Left colon (tissue), 2 donors: ENCODE measurements at regions of chr12 and their contacts with region 1.

Region 1: GRCh38 chr12:111313833-111314259 is 55.0 kb downstream of the PHETA1 start:
- DNase-seq: peak; percentile 32 to 67
- ATAC-seq: peak; percentile 53

Region 2: DNA sequence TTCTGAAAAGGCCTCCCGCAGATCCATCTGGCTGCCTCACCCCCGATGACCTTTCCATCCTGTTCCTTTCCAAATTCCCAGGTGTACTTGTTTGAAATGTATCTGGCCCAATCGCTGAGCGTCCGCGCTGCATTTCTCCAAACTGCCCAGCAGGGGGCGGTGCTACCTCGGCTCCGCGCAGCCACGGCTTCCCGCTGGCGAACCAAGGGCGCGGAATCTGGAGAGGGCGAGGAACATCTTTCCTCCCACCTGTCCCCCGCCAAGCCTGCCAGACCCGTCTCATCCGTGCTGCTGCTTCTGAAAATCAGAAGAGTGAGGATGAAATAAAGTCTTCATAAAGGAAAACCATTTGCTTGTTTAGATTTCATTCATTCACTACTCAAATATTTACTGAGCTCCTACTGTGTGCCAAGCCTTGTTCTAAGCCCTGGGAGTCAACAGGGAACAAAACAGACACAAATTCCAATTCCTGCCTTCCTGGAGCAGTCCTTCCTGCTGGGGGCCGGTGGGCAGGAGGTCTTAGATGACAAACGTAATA is 376.7 kb before region 1 on chr12:
- intact Hi-C with region 1: loop called in 1 of 2 experiments (anchors 5 kb)
- DNase-seq: peak in 1 of 2 donors; percentile 45
- ATAC-seq: peak; percentile 53

Region 3: GRCh38 chr12:111024205-111024801 is 289.5 kb before region 1 on chr12:
- intact Hi-C with region 1: loop called in 1 of 2 experiments (anchors 5 kb)
- DNase-seq: peak; percentile 34 to 63
- ATAC-seq: peak; percentile 85

Region 4: DNA sequence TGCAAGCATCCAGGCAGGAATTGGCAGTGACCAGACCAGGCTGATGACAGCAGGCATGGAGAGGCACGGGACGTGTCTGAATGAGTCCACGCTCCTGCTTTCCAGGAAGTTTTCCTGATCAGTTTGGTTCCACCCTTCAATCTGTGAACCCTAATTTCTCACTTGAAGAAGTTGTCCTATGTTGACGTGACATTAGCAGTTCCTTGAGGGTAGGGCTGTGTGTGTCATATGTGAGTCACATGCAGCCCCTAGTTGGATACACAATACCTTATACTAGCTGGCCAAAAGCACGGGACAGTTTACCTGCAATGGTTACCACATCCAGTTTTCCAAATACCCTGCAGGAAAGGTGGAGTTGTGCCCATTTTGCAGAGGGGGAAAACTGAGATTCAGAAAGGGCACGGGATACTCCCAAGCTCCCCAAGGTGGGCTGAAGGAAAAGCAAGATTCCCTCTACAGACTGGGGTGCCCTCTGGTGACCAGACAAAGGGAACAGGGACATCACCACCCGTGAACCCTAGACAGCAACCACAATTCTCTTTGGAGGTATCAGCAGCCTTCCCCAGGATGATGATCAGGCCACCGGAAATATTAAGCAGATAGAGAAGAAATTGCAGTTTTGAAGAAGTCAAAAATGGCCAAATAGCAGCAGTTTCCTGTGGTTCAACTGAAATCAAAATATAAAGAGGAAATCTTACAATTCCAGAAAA is 139.4 kb before region 1 on chr12:
- intact Hi-C with region 1: no loop called
- DNase-seq: no peak
- ATAC-seq: no peak

Region 5: DNA sequence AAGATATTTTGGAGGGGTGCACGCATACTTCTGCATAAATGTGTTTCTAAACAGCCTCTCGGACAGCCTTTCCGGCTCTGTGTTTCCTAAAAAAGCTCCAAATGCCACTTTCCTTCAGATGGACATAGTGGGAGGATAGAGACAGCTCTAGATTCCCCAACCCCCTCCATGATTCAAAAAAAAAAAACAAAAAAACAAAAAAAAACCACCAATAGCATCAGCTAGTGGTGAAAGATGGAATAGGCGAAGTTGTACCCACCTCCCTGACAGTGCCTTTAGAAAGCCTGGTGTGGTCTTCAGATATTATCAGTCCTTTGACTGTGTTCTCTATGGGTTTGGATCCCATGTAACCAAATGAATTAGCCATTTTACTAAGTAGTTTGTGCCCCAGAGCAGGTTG is 39.1 kb before region 1 on chr12:
- intact Hi-C with region 1: no loop called
- DNase-seq: no peak
- ATAC-seq: no peak